HepG2 (cell line): ENCODE measurements at regions of chr5 and their contacts with region 1.

Region 1: DNA sequence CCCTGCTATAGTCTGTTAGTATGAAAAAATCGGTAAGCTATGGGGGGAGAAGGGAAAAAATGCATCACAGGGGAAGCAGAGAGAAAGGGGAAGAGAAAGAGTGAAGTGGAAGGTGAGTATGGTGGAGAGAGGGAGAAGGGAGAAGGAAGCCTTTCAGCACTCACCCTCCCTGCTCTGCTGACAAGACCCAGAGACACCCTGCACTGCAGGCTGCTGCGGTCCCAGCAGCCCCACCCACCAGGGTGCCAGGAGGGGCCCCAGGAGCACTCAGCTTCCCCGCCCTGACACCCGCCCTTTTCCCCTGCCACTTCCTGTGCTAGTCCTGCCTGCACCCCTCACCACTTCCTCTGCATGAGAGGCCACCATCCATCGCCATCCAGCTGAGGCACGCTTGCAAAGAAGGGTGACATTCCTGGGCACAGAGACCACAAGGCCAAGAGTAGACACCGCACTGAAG is 12.7 kb downstream of the STK10 start:
- DNase-seq: peak; percentile 25
- ATAC-seq: peak; percentile 29
- H3K4me3 ChIP-seq: no peak overlapping the region
- H3K27ac ChIP-seq: no peak overlapping the region
- H3K4me1 ChIP-seq: peaks cover 44% of the 10 kb centered on the region
- H3K27me3 ChIP-seq: no peaks in the 10 kb centered on the region
- CTCF ChIP-seq: no peak
- EP300 ChIP-seq: no peak
- POLR2A ChIP-seq: 0 out of 4 replicates have a peak, but pooled peaks of 1 of the 2 experiments have one; percentile 29
- RAD21 ChIP-seq: no peak

Region 2: GRCh38 chr5:171874234-171874633 is 301.1 kb before region 1 on chr5:
- CTCF ChIA-PET with region 1: no interaction called
- POLR2A ChIA-PET with region 1: no interaction called
- in situ Hi-C with region 1: no loop called
- intact Hi-C with region 1: no loop called
- DNase-seq: no peak
- ATAC-seq: no peak
- H3K4me3 ChIP-seq: no peak overlapping the region
- H3K27ac ChIP-seq: no peak overlapping the region
- H3K4me1 ChIP-seq: no peaks in the 10 kb centered on the region
- H3K27me3 ChIP-seq: no peaks in the 10 kb centered on the region
- CTCF ChIP-seq: no peak
- EP300 ChIP-seq: no peak
- POLR2A ChIP-seq: no peak
- RAD21 ChIP-seq: no peak

Region 3: DNA sequence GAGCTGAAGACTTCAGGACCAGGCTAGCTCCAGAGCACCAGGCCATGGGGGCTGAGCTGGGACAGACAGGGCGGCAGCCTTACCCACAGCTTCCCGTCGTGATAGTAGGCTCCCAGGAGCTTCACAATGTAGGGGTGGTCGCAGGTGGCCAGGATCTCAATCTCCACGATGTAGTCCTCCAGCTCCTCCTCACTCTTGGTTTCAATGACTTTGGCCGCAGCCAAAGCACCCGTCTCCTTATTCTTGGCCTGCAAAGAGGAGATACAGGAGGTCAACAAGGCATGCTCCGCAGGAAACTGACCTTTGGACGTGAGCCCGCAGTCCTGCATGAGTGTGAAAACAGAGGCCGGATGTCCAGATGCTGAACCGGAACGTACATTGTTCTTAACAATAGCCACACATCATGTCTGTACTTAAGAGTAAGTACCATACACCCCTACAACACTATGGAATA is 18.7 kb before region 1 on chr5:
- CTCF ChIA-PET with region 1: no interaction called
- POLR2A ChIA-PET with region 1: interaction called, 65 read pairs
- in situ Hi-C with region 1: no loop called
- intact Hi-C with region 1: no loop called
- DNase-seq: peak; percentile 75
- ATAC-seq: peak; percentile 90
- H3K4me3 ChIP-seq: peak overlapping the region in 1 of 3 experiments; percentile 39; a peak in 2 of 6 replicates
- H3K27ac ChIP-seq: peak overlapping the region; percentile 45
- H3K4me1 ChIP-seq: peaks cover 38% of the 10 kb centered on the region
- H3K27me3 ChIP-seq: no peaks in the 10 kb centered on the region
- CTCF ChIP-seq: no peak
- EP300 ChIP-seq: no peak
- POLR2A ChIP-seq: no peak
- RAD21 ChIP-seq: no peak

Region 4: DNA sequence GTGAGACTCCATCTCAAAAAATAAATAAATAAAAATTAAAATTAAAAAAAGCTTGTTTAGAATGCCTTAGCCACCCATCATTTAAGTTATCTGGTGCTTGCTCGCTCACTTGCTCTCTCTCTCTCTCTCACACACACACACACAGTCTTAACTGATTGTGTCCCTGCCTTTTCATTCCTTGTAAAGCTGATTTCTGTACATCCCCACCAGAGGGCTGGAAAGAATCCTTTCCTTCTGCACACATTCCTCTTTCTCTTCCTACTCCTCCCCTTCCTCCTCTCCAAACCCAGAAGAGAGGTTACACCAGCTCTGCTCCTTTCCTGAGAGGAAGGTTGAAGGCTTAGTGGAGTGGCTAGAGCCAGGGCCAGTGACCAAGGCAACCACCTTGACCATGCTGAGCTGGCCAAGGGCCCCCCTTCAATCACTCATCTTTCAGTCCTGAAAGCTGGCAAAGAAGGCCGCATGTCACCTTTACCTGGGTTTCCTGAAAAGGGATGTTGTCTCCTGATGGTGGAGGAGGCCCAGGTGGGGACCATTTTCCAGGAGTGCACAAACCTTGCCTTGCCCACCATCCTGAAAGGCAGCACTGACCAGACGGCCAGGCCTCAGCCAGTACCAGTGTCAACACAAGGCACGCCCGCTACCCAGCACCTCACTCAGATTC is 12.8 kb before region 1 on chr5:
- CTCF ChIA-PET with region 1: no interaction called
- POLR2A ChIA-PET with region 1: interaction called, 65 read pairs
- in situ Hi-C with region 1: no loop called
- intact Hi-C with region 1: loop called (anchors 1 kb)
- DNase-seq: peak; percentile 30
- ATAC-seq: peak; percentile 12; the same call in 1 of the 3 replicates
- H3K4me3 ChIP-seq: no peak overlapping the region
- H3K27ac ChIP-seq: no peak overlapping the region
- H3K4me1 ChIP-seq: peaks cover 41% of the 10 kb centered on the region
- H3K27me3 ChIP-seq: no peaks in the 10 kb centered on the region
- CTCF ChIP-seq: 0 out of 2 replicates have a peak, but pooled peaks have one; percentile 7
- EP300 ChIP-seq: no peak
- POLR2A ChIP-seq: no peak
- RAD21 ChIP-seq: no peak

Region 5: GRCh38 chr5:172293054-172293744 is 117.9 kb after region 1 on chr5:
- CTCF ChIA-PET with region 1: no interaction called
- POLR2A ChIA-PET with region 1: no interaction called
- in situ Hi-C with region 1: no loop called
- intact Hi-C with region 1: no loop called
- DNase-seq: peak; percentile 80
- ATAC-seq: peak; percentile 95
- H3K4me3 ChIP-seq: peak overlapping the region; percentile 43 to 62 (median 43); a peak in 5 of 6 replicates
- H3K27ac ChIP-seq: peak overlapping the region; percentile 29
- H3K4me1 ChIP-seq: peaks cover 22% of the 10 kb centered on the region
- H3K27me3 ChIP-seq: no peaks in the 10 kb centered on the region
- CTCF ChIP-seq: peak; percentile 93
- EP300 ChIP-seq: peak in 1 of 2 experiments; percentile 46; a peak in 1 of 4 replicates
- POLR2A ChIP-seq: no peak
- RAD21 ChIP-seq: peak; percentile 93